GM12878 (cell line): ENCODE measurements at regions of chr4 and their contacts with region 1.

Region 1: DNA sequence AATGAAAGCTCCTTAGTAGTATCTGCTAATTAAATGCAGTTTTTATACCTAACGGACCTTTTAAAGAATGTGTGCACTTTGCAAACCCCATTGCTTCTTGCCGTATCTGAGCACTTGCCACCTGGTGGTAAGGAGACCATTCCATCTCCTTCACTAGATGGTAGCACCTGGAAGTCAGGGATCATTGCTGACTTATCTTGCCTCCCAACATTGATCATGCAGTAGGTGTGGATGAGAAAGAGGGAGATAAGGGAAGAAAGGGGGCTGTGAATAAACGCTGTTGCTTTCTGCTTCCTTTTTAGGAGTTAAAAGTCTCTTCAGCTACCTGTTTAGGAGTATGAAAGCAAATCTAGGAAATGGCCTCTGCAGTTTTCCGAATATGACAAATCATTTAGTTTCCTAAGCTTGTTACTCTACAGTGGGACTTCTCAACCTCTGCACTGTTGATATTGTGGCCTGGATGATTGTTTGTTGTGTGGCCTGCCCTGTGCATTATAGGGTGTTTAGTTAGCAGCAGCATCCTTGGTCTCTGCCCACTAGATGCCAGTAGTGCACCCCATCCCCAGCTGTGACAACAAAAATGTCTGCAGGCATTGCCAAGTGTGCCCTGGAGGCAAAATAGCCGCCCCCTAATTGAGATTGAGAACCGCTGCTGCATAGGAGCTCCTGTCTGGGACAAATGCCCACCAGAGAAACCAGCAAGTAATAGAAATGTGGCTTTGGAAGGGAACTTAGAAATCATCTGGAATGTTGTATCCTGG is 38.8 kb downstream of the GAB1 start:
- DNase-seq: no peak
- ATAC-seq: peak; percentile 71
- H3K4me3 ChIP-seq: no peak overlapping the region
- H3K27ac ChIP-seq: peak overlapping the region; percentile 5; the same call in 1 of the 2 replicates
- H3K4me1 ChIP-seq: peaks cover 40% of the 10 kb centered on the region
- H3K27me3 ChIP-seq: no peaks in the 10 kb centered on the region
- CTCF ChIP-seq: peak; percentile 68 to 78 (median 78)
- EP300 ChIP-seq: no peak
- POLR2A ChIP-seq: no peak
- RAD21 ChIP-seq: peak; percentile 88

Region 2: GRCh38 chr4:143346206-143346605 is 29.3 kb before region 1 on chr4:
- CTCF ChIA-PET with region 1: interaction called, 76 read pairs
- POLR2A ChIA-PET with region 1: interaction called, 3 read pairs
- RAD21 ChIA-PET with region 1: interaction called, 63 read pairs
- SMC1A ChIA-PET with region 1: interaction called, 58 read pairs
- in situ Hi-C with region 1: no loop called
- intact Hi-C with region 1: no loop called
- DNase-seq: no peak
- ATAC-seq: no peak
- H3K4me3 ChIP-seq: no peak overlapping the region
- H3K27ac ChIP-seq: no peak overlapping the region
- H3K4me1 ChIP-seq: no peaks in the 10 kb centered on the region
- H3K27me3 ChIP-seq: no peaks in the 10 kb centered on the region
- CTCF ChIP-seq: no peak
- EP300 ChIP-seq: no peak
- POLR2A ChIP-seq: no peak
- RAD21 ChIP-seq: no peak

Region 3: DNA sequence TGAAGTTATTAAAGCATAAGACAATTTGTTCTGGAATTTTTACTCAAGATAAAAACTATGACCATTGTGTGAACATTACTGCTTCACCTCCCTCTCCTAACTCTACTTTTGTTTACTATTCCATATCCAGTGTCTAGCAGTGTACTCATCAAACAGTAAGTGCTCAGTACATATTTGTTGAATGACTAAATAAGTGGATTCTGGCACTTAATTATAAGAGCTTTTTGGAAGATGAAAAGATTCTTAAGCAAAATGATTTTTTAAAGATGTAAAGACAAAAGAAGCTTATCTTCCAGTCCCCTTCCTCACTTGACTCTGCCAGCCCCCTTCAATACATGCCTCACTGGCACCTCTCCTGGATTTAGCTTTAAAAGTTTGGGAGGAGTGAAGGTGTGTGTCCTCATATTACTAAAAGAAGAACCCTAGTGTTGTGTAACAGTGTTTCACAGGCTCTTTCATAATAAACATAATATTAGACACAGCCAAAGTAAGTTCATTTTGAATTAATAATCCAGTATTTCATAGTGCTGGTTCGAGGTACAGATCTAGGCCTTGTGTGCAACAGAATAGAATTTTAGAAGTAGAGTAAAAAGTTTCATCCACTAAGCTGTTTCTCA is 14.2 kb after region 1 on chr4:
- CTCF ChIA-PET with region 1: interaction called, 39 read pairs
- POLR2A ChIA-PET with region 1: interaction called, 4 read pairs
- RAD21 ChIA-PET with region 1: interaction called, 13 read pairs
- SMC1A ChIA-PET with region 1: interaction called, 204 read pairs
- in situ Hi-C with region 1: no loop called
- intact Hi-C with region 1: no loop called
- DNase-seq: no peak
- ATAC-seq: no peak
- H3K4me3 ChIP-seq: no peak overlapping the region
- H3K27ac ChIP-seq: no peak overlapping the region
- H3K4me1 ChIP-seq: no peaks in the 10 kb centered on the region
- H3K27me3 ChIP-seq: no peaks in the 10 kb centered on the region
- CTCF ChIP-seq: no peak
- EP300 ChIP-seq: no peak
- POLR2A ChIP-seq: no peak
- RAD21 ChIP-seq: no peak

Region 4: GRCh38 chr4:143411527-143412480 is 36.3 kb after region 1 on chr4:
- CTCF ChIA-PET with region 1: interaction called, 63 read pairs
- POLR2A ChIA-PET with region 1: interaction called, 16 read pairs
- RAD21 ChIA-PET with region 1: interaction called, 97 read pairs
- SMC1A ChIA-PET with region 1: interaction called, 89 read pairs
- in situ Hi-C with region 1: no loop called
- intact Hi-C with region 1: no loop called
- DNase-seq: no peak
- ATAC-seq: peak; percentile 22
- H3K4me3 ChIP-seq: no peak overlapping the region
- H3K27ac ChIP-seq: no peak overlapping the region
- H3K4me1 ChIP-seq: no peaks in the 10 kb centered on the region
- H3K27me3 ChIP-seq: peaks cover 0 to 2% of the 10 kb centered on the region in 2 experiments; a peak in 1 of 4 replicates
- CTCF ChIP-seq: no peak
- EP300 ChIP-seq: no peak
- POLR2A ChIP-seq: no peak
- RAD21 ChIP-seq: no peak

Region 5: DNA sequence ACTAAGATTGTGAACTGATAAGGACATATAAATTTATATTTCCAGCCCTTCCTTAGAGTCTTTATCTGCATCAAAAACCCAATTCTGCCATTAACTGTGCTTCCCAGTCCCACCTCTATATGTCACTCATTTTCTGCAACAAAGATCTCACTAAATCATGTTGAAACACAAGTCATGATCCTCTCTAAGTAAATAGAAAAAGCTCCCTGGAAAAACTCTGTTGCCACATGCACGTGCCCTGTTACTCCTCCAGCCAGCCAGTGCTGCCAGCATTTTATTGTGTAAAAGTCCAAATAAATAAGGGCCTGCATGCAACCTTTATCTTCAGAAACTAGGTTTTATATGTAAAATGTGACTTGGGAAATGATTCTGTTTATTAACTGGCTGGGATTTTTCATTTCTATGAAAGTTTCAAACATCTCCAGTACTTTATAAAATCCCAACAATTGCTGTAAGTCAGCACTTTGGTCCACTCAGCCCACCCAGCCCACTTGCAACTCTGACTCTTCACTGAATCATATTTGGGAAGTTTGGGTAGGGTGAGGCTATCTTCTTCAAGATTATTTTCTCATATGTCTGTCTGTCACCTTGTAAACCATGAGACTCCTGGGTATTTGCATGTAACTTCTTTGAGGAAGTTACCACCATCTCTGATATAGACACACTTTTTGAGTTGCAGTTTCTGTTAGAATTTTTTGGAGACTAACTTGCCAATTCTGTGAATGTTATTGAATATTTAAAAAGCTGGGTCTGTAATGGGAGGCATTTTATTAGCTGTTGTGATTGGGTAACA is 98.0 kb after region 1 on chr4:
- CTCF ChIA-PET with region 1: interaction called, 32 read pairs
- POLR2A ChIA-PET with region 1: interaction called, 3 read pairs
- RAD21 ChIA-PET with region 1: interaction called, 101 read pairs
- SMC1A ChIA-PET with region 1: interaction called, 116 read pairs
- in situ Hi-C with region 1: no loop called
- intact Hi-C with region 1: no loop called
- DNase-seq: no peak
- ATAC-seq: peak; percentile 71
- H3K4me3 ChIP-seq: no peak overlapping the region
- H3K27ac ChIP-seq: no peak overlapping the region
- H3K4me1 ChIP-seq: no peaks in the 10 kb centered on the region
- H3K27me3 ChIP-seq: no peaks in the 10 kb centered on the region; a peak in 1 of 4 replicates
- CTCF ChIP-seq: no peak
- EP300 ChIP-seq: no peak
- POLR2A ChIP-seq: no peak
- RAD21 ChIP-seq: no peak

Region 6: DNA sequence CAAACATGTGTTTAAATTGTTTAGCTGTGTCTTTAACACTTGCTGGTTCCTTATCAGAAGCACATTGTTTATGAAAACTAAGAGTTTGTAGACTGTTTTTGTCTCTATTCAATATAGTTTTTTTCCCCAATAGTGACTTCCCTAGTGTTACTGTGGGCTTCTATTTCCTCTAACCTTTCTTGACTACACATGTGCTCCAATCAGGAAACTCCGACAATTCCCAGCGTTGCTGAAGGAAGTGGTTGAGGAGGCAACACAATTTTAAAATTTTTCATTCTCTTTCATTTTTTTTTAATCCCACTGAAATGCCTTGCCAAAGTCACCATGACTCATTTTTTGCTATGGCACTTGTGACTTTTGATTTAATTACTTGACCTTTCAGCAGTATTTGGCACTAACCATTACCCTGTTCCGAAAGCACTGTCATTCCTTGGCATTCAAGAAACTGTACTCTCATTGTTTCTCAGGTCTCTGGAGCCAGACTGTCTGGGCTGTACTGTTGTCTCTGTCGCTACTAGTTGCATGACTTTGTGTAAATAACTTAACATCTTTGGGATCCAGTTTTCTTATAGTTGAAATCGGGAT is 392.6 kb after region 1 on chr4:
- CTCF ChIA-PET with region 1: no interaction called
- POLR2A ChIA-PET with region 1: no interaction called
- RAD21 ChIA-PET with region 1: no interaction called
- SMC1A ChIA-PET with region 1: no interaction called
- in situ Hi-C with region 1: no loop called
- intact Hi-C with region 1: no loop called
- DNase-seq: no peak
- ATAC-seq: no peak
- H3K4me3 ChIP-seq: no peak overlapping the region
- H3K27ac ChIP-seq: no peak overlapping the region
- H3K4me1 ChIP-seq: no peaks in the 10 kb centered on the region
- H3K27me3 ChIP-seq: no peaks in the 10 kb centered on the region
- CTCF ChIP-seq: no peak
- EP300 ChIP-seq: no peak
- POLR2A ChIP-seq: no peak
- RAD21 ChIP-seq: no peak